PC-3 (cell line): ENCODE measurements at regions of chr3 and their contacts with region 1.

Region 1: DNA sequence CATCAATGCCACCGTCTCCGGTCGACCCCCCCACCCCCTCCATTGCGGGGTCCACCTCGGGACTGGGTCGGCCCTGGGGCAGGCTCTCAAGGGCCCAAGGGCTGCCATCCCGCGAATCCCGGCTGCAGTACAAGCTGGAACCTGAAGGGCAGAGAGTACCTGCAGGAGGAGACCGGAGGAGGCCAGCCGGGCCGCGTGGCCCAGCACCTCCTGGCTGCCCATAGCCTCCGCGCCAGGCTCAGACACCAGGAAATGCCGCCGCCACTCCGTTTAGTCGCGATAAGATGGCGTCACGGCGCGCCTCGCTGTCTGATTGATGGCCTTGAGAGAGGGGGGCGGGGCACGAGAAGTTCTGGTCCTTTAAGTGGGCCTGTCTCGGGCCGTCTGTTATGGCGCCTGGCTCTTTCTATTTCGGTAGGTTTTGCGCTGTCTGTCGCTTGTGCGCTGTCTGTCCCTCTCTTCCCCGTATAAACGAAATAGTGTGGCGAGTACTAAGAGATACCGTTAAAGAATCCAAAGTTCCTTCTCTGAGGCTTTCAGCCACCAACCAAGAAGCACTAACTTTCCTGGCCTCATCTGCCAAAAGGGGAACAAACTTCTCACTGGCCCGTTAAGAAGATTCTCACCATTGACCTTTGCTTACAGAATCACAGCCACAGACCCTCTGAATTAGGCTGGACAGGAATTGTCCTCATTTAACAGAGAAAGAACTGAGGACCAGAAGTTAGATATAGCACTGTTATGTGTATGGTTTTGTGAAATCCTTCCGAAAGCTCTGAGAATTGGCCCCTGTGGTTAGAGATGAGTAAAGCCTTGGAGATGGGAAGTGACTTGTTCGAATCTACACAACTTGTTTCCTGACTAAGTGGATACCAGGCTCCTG is at the start of gene RFT1:
- DNase-seq: peak; percentile 96
- ATAC-seq: peak; percentile 75
- H3K4me3 ChIP-seq: peak within 1 kb of the TSS; percentile 96
- H3K27ac ChIP-seq: peak within 1 kb of the TSS; percentile 72
- H3K4me1 ChIP-seq: peaks cover 40% of the 10 kb centered on the region
- H3K27me3 ChIP-seq: no peaks in the 10 kb centered on the region
- CTCF ChIP-seq: no peak
- total RNA-seq, gene RFT1: 21.1 and 24.6 TPM in 2 replicates

Region 2: GRCh38 chr3:52934630-52935530 is 195.5 kb before region 1 on chr3:
- CTCF ChIA-PET with region 1: no interaction called
- POLR2A ChIA-PET with region 1: no interaction called
- intact Hi-C with region 1: no loop called
- DNase-seq: peak; percentile 64
- ATAC-seq: peak; percentile 99
- H3K4me3 ChIP-seq: no peak overlapping the region
- H3K27ac ChIP-seq: no peak overlapping the region
- H3K4me1 ChIP-seq: no peaks in the 10 kb centered on the region
- H3K27me3 ChIP-seq: no peaks in the 10 kb centered on the region
- CTCF ChIP-seq: peak; percentile 88

Region 3: GRCh38 chr3:52983336-52983807 is 147.0 kb before region 1 on chr3:
- CTCF ChIA-PET with region 1: no interaction called
- POLR2A ChIA-PET with region 1: interaction called, 11 read pairs
- intact Hi-C with region 1: no loop called
- DNase-seq: no peak
- ATAC-seq: no peak
- H3K4me3 ChIP-seq: no peak overlapping the region
- H3K27ac ChIP-seq: no peak overlapping the region
- H3K4me1 ChIP-seq: no peaks in the 10 kb centered on the region
- H3K27me3 ChIP-seq: no peaks in the 10 kb centered on the region
- CTCF ChIP-seq: no peak

Region 4: DNA sequence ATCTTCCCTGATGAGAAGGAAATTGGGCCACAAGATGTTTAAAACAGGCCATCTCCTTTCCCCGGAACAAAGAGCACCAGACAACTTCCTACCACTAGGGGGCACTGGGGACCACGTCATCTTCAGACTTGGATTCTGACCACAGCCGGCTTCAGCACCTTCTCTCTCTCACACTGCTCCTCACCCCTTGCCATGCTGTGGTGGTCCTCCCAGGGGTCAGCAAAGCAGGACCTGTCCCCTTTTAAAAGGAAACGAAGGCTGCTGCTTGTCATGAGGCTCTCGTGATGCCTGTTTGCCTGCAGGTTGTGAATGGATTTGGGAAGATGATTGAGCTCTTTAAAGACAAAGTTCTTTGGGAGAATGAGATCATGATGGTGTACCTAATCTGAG is 16.4 kb before region 1 on chr3:
- CTCF ChIA-PET with region 1: interaction called, 9 read pairs
- POLR2A ChIA-PET with region 1: no interaction called
- intact Hi-C with region 1: loop called (anchors 1 kb)
- DNase-seq: peak; percentile 90
- ATAC-seq: peak; percentile 61
- H3K4me3 ChIP-seq: no peak overlapping the region
- H3K27ac ChIP-seq: peak overlapping the region; percentile 81
- H3K4me1 ChIP-seq: peaks cover 44% of the 10 kb centered on the region
- H3K27me3 ChIP-seq: no peaks in the 10 kb centered on the region
- CTCF ChIP-seq: peak; percentile 99

Region 5: DNA sequence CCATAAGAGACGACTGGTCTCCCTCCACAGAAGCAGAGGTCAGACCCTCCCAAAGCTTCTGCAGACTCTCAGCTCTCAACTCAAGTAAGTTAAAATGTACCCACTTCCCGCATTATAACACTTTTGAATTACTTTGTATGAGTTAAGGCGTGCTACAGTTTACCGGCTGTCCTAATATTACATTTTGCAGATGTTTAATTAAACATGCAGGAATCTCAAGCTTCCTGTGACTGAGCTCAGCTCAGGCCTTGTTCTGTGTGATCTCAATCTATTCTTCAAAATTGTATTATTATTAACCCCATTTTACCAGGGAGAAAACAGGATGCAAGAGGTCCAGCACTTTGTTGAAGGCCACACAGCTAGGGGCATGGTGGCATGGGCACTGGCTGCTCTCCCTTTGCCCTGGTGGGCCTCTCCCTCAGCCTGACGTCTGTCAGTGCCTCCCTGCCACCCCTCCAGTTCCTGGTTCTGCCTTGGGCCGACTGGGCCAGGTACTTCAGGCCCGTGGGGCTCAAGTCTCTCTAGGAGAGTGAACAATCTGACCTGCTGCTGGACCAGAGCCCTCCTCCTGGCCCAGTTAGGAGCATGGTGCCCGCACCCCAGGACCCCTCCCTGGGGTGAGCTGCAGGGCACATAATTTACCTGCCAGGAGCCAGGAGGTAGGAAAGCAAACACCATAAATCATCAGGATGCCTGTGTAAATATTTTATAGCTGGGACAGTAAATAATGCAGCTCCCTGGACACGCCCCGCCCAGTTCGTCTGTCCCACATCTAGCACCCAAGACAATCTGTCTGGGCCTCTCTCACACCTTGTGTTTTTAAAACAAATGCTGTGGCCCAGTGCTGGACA is 14.7 kb after region 1 on chr3:
- CTCF ChIA-PET with region 1: interaction called, 8 read pairs
- POLR2A ChIA-PET with region 1: no interaction called
- intact Hi-C with region 1: loop called (anchors 1 kb)
- DNase-seq: peak; percentile 85
- ATAC-seq: peak; percentile 71
- H3K4me3 ChIP-seq: peak overlapping the region; percentile 31; the same call in 1 of the 2 replicates
- H3K27ac ChIP-seq: peak overlapping the region; percentile 79
- H3K4me1 ChIP-seq: peaks cover 57% of the 10 kb centered on the region
- H3K27me3 ChIP-seq: no peaks in the 10 kb centered on the region
- CTCF ChIP-seq: no peak

Region 6: GRCh38 chr3:53160660-53161449 is 30.4 kb after region 1 on chr3 and contains the start of gene PRKCD:
- CTCF ChIA-PET with region 1: interaction called, 16 read pairs
- POLR2A ChIA-PET with region 1: interaction called, 5 read pairs
- intact Hi-C with region 1: loop called (anchors 1 kb)
- DNase-seq: peak; percentile 85
- ATAC-seq: peak; percentile 77
- H3K4me3 ChIP-seq: peak within 1 kb of the TSS; percentile 96
- H3K27ac ChIP-seq: peak within 1 kb of the TSS; percentile 74
- H3K4me1 ChIP-seq: peaks cover 42% of the 10 kb centered on the region
- H3K27me3 ChIP-seq: no peaks in the 10 kb centered on the region
- CTCF ChIP-seq: peak; percentile 44
- total RNA-seq, gene PRKCD: 7.8 and 18.7 TPM in 2 replicates

Region 7: DNA sequence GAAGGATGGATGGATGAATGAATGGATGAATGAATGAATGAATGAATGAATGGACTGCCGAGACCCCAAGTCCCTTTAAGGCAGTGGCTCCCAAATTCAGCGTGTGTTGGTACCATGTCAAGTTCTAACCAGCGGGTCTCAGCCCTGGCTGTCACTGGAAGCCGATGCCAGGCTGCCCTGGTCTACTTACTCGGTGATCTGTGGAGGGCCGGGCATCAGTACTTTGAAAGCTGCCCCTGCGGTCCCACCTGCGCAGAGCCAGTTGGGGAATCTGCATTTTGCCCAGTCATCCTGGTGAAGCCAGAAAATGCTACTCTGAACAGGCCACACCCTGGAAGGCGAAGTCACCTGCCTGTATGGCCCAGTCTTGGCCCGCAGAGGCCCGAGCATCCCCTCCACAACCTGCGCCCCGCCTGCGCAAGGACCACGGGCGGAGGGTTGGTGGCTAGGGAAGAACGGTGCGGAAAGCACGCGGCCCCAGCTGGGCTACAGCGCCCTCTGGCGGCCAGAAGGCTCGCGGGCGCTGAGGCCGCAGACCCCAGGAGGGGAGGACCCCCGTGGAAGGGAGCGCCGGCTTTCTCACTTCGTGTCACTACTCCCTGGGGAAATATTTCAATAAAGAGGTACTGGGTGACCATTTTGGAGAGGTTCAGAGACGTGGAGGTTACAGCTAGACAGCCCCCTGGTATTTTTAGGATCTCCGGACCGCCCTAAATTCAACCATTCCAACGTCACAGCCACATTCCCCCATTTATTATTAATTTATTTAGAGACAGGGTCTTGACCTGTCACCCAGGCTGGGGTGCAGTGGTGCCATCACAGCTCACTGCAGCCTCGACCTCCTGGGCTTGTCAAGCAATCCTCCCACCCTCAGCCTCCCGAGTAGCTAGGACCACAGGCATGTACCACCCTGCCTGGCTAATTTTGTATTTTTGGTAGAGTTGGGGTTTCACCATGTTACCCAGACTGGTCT is 65.5 kb after region 1 on chr3:
- CTCF ChIA-PET with region 1: interaction called, 6 read pairs
- POLR2A ChIA-PET with region 1: no interaction called
- intact Hi-C with region 1: loop called (anchors 1 kb)
- DNase-seq: peak; percentile 65
- ATAC-seq: peak; percentile 52
- H3K4me3 ChIP-seq: no peak overlapping the region
- H3K27ac ChIP-seq: no peak overlapping the region
- H3K4me1 ChIP-seq: peaks cover 29% of the 10 kb centered on the region
- H3K27me3 ChIP-seq: no peaks in the 10 kb centered on the region
- CTCF ChIP-seq: peak; percentile 99

Region 8: DNA sequence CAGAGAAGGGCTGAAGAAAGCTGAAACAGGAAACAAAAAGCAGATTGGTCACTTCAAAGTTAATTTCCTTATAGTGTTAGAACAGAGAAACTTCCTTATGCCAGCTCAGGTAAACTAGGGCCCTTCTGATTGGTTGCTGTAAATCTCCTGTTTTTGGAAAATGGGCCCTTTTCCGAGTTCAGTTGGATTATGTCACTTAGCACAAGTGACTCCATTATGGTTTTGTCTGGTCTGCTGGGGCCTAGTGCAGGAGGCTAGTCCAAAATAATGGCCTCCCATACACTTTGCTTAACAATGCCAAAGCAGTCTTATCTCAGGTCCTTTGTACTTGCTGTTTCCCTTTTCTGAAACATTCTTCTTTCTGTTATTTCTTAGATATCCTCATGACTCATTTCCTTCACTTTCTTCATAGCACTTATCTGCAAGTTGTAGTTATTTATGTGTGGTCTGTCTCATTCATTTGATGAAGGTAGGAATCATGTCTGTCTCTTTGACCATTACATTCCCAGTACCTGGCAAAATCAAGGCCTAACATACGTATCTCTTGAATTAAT is 224.6 kb after region 1 on chr3:
- CTCF ChIA-PET with region 1: no interaction called
- POLR2A ChIA-PET with region 1: no interaction called
- intact Hi-C with region 1: no loop called
- DNase-seq: peak; percentile 8
- ATAC-seq: peak; percentile 30
- H3K4me3 ChIP-seq: no peak overlapping the region
- H3K27ac ChIP-seq: no peak overlapping the region
- H3K4me1 ChIP-seq: peaks cover 4% of the 10 kb centered on the region; the same call in 1 of the 2 replicates
- H3K27me3 ChIP-seq: no peaks in the 10 kb centered on the region
- CTCF ChIP-seq: no peak